ENCODE measurements at regions of chr11 and their contacts with region 1.

Region 1: DNA sequence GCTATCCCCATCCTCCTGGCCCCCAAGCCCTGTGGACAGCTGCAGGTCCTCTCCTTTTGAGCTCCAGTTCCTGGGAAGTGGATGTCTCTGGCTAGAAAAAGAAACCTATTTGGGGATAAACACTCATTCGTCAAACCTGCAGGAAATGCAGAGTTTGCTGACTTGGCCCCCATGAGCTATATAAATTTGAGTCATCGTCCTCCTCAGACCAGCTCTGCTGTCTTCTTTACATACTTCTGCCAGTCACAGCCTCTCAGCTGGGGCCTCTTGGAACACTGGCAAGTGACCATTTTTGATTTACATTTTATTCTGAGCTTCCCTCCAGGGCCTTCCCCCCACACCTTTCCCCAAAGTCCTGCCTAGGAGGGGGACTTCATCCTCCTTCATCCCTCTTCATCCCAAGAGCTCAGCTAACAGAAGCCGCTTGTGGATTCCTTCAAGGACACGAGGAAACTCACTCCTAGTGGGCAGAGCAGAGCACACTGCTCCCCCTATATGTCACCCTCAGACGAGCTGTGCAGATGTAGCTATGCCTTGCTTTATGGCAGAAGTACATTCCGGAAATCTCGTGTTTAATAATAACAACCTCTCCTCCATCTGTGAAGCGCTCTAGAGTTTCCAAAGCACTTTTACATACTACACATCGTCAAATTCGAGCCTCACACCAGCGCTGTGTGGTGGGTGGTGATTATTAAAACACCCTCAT is 131.8 kb downstream of the FEZ1 start:
- H3K4me3 ChIP-seq: no peak overlapping the region
- H3K27ac ChIP-seq: no peak overlapping the region
- H3K4me1 ChIP-seq: no peaks in the 10 kb centered on the region
- CTCF ChIP-seq: no peak

Region 2: DNA sequence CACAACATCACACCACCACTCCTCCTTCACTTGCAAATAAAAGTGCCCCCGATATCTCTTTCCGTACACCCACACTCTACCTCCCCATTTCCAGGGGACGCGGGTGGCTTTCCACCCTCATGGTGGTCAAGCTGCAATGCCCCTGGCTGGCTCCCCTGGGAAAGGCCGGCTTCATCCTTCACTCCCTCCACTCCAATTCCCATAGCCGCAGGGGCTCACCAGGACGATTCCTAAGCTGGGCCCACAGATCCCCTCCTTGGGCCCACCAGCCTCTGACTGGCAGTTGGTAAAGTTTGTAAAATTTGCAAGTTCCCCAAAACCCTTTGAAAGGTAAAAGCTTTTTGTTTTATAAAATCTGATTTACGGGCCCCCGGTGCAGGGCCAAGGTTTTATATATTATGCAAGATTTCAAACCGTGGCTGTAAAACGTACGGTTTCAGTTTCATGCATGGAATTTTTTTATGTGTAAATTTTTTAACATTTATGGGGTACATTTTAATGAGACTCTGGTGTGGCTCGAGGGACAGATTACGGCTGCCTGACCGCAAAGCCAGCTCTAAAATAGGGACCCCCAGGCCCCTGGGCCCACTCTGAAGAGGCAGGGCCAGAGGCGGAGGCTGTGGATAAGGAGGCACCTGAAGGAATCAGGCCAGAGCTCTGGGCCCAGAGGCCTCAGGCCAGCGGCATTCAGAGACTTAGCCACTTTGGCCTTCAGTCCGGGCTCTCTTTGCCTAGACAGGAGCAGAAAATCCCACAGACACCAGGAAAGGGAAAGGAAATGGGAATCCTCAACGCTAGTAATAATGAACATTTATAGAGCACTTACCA is 25.3 kb after region 1 on chr11:
- CTCF ChIA-PET with region 1: no interaction called
- POLR2A ChIA-PET with region 1: no interaction called
- H3K4me3 ChIP-seq: no peak overlapping the region
- H3K27ac ChIP-seq: no peak overlapping the region
- H3K4me1 ChIP-seq: no peaks in the 10 kb centered on the region
- CTCF ChIP-seq: no peak

Region 3: GRCh38 chr11:125429166-125429707 is 65.0 kb after region 1 on chr11:
- CTCF ChIA-PET with region 1: interaction called, 14 read pairs
- POLR2A ChIA-PET with region 1: interaction called, 3 read pairs
- H3K4me3 ChIP-seq: no peak overlapping the region
- H3K27ac ChIP-seq: no peak overlapping the region
- H3K4me1 ChIP-seq: no peaks in the 10 kb centered on the region
- CTCF ChIP-seq: peak; percentile 66

Region 4: GRCh38 chr11:125470355-125470754 is 106.1 kb after region 1 on chr11:
- CTCF ChIA-PET with region 1: no interaction called
- POLR2A ChIA-PET with region 1: no interaction called
- H3K4me3 ChIP-seq: no peak overlapping the region
- H3K27ac ChIP-seq: no peak overlapping the region
- H3K4me1 ChIP-seq: no peaks in the 10 kb centered on the region
- CTCF ChIP-seq: no peak